OCI-LY7 (cell line): ENCODE measurements at regions of chr12 and their contacts with region 1.

Region 1: DNA sequence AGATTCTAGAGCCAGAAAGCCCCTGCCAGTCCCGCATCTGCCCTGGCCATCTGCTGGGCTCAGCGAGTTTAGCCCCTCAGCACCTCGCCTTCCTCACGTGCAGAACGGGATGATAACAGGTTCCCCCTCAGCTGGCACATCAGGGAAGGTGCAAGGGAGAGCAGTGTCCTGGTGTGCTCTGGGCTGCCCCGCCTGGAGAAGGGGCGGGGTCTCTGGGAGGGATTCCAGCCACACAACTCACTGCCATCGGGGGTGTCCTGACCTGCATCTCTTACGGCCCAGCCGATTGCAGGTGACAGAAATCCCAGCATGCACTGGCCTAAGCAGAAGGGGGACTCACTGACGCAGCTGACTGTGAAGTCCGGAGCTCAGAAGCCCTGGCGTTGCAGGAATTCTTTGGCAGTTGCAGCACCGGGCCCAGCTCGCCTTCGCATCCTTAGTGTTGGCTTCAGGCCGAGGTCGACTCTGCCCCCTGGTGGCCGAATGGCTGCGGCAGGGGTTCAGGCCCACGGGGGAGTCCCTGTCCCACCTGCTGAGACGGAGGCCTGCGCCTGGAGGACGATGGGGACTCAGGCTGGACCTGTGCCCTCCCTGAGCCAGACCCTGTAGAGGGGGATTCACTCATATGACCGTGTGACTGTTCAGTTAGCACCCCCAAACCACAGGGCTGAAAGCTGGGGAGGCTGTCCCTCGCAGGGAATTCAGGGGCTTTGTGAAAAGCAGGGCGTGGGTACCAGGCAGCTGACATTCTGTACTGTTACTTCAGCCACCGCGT is 178.6 kb downstream of the ADGRD1 start:
- DNase-seq: peak; percentile 73
- H3K4me3 ChIP-seq: no peak overlapping the region
- H3K27ac ChIP-seq: no peak overlapping the region
- H3K4me1 ChIP-seq: no peaks in the 10 kb centered on the region
- CTCF ChIP-seq: peak; percentile 90

Region 2: DNA sequence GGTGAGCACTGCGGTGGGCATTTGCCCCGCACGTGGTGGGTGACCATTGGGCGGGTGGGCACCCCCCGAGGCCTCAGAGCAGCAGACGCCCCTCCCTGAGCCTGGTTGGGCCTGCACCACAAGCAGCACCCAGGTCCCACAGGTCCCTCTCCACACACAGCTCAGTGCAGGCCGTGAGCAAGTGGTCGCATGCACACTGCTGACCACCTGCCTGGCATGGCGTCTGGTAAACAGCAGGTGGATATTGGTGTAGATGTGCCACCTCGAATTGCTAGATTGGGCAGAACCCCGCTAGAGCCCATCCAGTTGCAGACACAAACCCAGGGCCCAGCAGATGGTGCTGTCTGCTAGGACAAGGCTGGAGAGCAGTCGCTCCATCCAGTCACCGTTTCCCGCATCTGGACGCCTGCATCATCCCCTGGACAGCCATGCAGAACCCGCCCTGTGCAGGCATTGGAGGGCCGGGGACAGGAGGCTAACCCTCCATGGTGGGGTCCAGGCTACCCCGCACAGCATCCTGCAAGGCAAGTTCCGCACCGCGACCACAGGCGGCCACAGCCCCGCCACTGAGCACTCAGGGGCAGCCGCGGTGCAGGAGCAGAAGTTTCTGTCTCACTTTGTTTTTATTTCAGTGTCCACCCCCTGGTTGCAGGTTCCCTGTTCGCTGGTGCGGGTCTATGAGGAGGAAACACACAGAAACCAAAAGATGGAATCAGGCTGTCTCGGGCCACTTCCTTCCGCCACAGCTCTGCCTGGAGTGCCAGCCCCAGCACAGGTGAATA is 370.6 kb before region 1 on chr12:
- CTCF ChIA-PET with region 1: no interaction called
- POLR2A ChIA-PET with region 1: no interaction called
- intact Hi-C with region 1: loop called (anchors 5 kb)
- DNase-seq: peak; percentile 36
- H3K4me3 ChIP-seq: peak overlapping the region; percentile 11
- H3K27ac ChIP-seq: no peak overlapping the region
- H3K4me1 ChIP-seq: no peaks in the 10 kb centered on the region
- CTCF ChIP-seq: peak; percentile 58

Region 3: DNA sequence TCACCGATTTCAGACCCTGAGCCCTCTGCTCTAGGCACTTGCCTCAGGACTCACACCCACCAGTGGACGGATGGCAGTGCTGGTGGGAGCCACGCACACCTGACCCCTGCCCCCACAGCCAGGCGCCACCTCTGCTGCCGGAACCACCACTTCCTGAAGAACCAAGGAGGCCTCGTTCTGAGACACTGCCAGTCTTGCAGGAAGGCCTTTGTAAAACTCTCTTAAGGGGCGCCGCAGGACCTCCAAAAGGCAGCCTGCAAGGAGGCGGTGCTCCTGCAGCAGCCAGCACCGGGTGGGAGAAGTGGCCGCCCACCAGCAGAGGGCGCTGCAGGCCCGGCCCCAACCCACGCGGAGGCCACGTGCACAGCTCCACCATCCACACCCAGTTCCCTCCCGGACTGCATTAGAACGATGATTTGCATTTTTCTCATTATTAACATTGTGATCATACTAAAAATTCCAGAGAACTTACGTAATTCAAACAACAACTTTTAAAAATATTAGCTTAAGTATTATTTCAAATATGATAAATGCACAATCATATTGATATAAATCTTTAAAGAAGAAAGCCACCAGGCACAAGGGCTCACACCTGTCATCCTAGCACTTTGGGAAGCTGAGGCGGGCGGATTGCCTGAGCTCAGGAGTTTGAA is 306.0 kb before region 1 on chr12:
- CTCF ChIA-PET with region 1: no interaction called
- POLR2A ChIA-PET with region 1: no interaction called
- intact Hi-C with region 1: loop called (anchors 10 kb)
- DNase-seq: peak; percentile 39
- H3K4me3 ChIP-seq: no peak overlapping the region
- H3K27ac ChIP-seq: no peak overlapping the region
- H3K4me1 ChIP-seq: peaks cover 8% of the 10 kb centered on the region
- CTCF ChIP-seq: peak; percentile 91

Region 4: GRCh38 chr12:131057211-131057721 is 75.0 kb before region 1 on chr12:
- CTCF ChIA-PET with region 1: no interaction called
- POLR2A ChIA-PET with region 1: no interaction called
- intact Hi-C with region 1: no loop called
- DNase-seq: no peak
- H3K4me3 ChIP-seq: no peak overlapping the region
- H3K27ac ChIP-seq: no peak overlapping the region
- H3K4me1 ChIP-seq: peaks cover 3% of the 10 kb centered on the region
- CTCF ChIP-seq: no peak

Region 5: GRCh38 chr12:131104463-131105350 is 27.6 kb before region 1 on chr12:
- CTCF ChIA-PET with region 1: no interaction called
- POLR2A ChIA-PET with region 1: no interaction called
- intact Hi-C with region 1: loop called (anchors 2 kb)
- DNase-seq: peak; percentile 70
- H3K4me3 ChIP-seq: no peak overlapping the region
- H3K27ac ChIP-seq: no peak overlapping the region
- H3K4me1 ChIP-seq: peaks cover 10% of the 10 kb centered on the region
- CTCF ChIP-seq: peak; percentile 87